Heart right ventricle (tissue), 16 donors: ENCODE measurements at regions of chr4 and their contacts with region 1.

Region 1: GRCh38 chr4:64807821-64808220 is 398.6 kb upstream of the TECRL start:
- DNase-seq: no peak
- ATAC-seq: no peak
- H3K4me3 ChIP-seq: no peak overlapping the region
- H3K27ac ChIP-seq: no peak overlapping the region
- H3K4me1 ChIP-seq: no peaks in the 10 kb centered on the region
- H3K27me3 ChIP-seq: no peaks in the 10 kb centered on the region
- CTCF ChIP-seq: no peak

Region 2: DNA sequence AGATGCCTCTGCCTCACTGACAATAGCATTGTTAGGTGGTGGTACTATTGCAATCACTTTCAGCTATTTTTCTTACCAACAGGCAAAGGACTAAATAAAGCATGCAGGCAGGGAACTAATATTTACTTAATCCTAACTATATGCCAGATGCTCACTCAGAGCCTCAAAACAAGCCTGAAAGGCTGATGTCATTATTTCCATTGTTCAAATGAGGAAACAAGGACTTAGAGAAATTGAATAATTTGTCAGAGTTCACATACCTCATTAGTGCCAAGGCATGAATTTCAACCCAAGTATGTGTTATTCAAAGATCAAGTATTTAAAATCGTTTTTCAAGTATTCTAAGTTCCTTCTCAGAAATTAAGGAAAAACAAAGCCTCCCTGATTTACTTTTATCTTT is 23.7 kb before region 1 on chr4:
- intact Hi-C with region 1: no loop called
- DNase-seq: no peak
- ATAC-seq: no peak
- H3K4me3 ChIP-seq: no peak overlapping the region
- H3K27ac ChIP-seq: no peak overlapping the region
- H3K4me1 ChIP-seq: no peaks in the 10 kb centered on the region
- H3K27me3 ChIP-seq: peaks cover 0 to 3% (median 0%) of the 10 kb centered on the region in 7 donors
- CTCF ChIP-seq: no peak

Region 3: GRCh38 chr4:64822405-64822804 is 14.6 kb after region 1 on chr4:
- intact Hi-C with region 1: loop called in 1 of 10 experiments (anchors 2 kb)
- DNase-seq: no peak
- ATAC-seq: no peak
- H3K4me3 ChIP-seq: no peak overlapping the region
- H3K27ac ChIP-seq: no peak overlapping the region
- H3K4me1 ChIP-seq: no peaks in the 10 kb centered on the region
- H3K27me3 ChIP-seq: no peaks in the 10 kb centered on the region
- CTCF ChIP-seq: no peak